ENCODE measurements at regions of chr6 and their contacts with region 1.

Region 1: GRCh38 chr6:31541658-31542521 is at the start of gene DDX39B:
- DNase-seq: peak; percentile 95
- ATAC-seq: peak; percentile 79
- H3K4me3 Mint-ChIP-seq: peak within 1 kb of the TSS; percentile 81
- H3K27ac Mint-ChIP-seq: peak within 1 kb of the TSS; percentile 95
- H3K4me1 Mint-ChIP-seq: peaks cover 43% of the 10 kb centered on the region
- H3K27me3 Mint-ChIP-seq: no peaks in the 10 kb centered on the region
- CTCF ChIP-seq: no peak
- total RNA-seq, gene DDX39B: 568 to 572 TPM

Region 2: GRCh38 chr6:31529329-31530150 is 12.3 kb before region 1 on chr6:
- CTCF ChIA-PET with region 1: interaction called, 7 read pairs
- POLR2A ChIA-PET with region 1: interaction called, 24 read pairs
- intact Hi-C with region 1: no loop called
- DNase-seq: no peak
- ATAC-seq: peak; percentile 19
- H3K4me3 Mint-ChIP-seq: no peak overlapping the region
- H3K27ac Mint-ChIP-seq: peak overlapping the region; percentile 15
- H3K4me1 Mint-ChIP-seq: peaks cover 12% of the 10 kb centered on the region
- H3K27me3 Mint-ChIP-seq: no peaks in the 10 kb centered on the region
- CTCF ChIP-seq: no peak

Region 3: DNA sequence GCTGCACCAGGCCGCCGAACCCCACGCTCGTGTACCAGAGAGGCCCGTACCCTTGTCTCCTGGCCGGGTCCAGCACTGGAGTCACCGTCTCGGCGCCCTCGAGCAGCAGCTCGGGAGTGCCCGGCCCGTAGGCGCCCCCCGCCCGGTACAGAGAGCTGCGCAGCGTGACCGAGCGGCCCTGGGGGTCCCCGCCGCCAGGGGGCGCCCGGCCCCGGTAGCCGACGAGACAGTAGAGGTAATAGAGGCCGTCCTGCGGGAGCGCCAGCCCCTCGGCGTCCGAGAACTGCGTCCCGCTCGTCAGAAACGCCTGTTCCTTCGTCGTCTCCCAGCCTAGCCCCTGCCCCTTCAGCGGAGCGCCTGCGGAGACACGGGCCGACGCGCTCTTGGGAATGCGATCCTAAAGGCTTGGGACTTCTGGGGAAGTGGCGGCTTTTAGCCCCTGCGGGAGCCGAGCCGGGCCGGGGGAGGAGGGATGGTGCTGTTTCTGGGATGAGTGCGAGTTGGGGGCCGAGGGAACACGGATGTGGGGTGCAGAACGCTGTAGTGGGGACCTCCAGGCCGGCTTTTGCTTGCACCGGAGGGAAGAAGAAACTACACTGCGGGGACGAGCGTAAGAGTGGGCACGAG is 39.0 kb after region 1 on chr6:
- CTCF ChIA-PET with region 1: interaction called, 2,542 read pairs
- POLR2A ChIA-PET with region 1: interaction called, 97 read pairs
- intact Hi-C with region 1: loop called (anchors 5 kb)
- DNase-seq: peak; percentile 92
- ATAC-seq: peak; percentile 55
- H3K4me3 Mint-ChIP-seq: peak overlapping the region; percentile 96
- H3K27ac Mint-ChIP-seq: peak overlapping the region; percentile 98
- H3K4me1 Mint-ChIP-seq: peaks cover 47% of the 10 kb centered on the region
- H3K27me3 Mint-ChIP-seq: no peaks in the 10 kb centered on the region
- CTCF ChIP-seq: peak; percentile 97

Region 4: DNA sequence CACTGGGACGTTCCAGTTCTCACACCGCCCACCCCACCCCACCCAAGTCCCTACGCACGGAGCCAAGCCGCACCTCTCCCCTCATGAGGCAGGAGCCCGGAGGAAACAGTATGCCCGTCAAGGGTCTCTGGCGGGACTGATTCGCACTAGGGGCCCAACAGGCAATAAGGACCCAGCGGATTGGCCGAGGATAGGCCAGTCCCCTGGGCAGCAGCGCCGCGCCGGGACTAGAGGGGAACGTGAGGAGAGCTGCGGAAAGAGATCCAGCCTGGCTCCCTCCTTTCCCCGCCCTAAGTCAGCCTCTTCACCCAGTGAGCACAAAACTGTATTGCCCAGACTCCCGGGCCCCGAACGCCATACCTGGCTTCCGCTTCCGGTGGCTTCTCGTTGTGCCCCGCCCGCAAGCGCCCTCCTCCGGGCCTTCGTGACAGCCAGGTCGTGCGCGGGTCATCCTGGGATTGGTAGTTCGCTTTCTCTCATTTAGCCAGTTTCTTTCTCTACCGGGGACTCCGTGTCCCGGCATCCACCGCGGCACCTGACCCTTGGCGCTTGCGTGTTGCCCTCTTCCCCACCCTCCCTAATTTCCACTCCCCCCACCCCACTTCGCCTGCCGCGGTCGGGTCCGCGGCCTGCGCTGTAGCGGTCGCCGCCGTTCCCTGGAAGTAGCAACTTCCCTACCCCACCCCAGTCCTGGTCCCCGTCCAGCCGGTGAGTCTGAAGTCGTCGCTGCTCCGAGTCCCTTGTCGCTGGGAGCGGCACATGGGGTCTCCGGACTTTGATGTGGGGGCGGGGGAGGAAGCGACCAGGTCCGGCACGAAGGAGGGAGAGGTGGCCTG is 123.8 kb after region 1 on chr6 and contains the start of gene CSNK2B:
- CTCF ChIA-PET with region 1: no interaction called
- POLR2A ChIA-PET with region 1: interaction called, 7 read pairs
- intact Hi-C with region 1: loop called (anchors 10 kb)
- DNase-seq: peak; percentile 99
- ATAC-seq: peak; percentile 88
- H3K4me3 Mint-ChIP-seq: peak within 1 kb of the TSS; percentile 98
- H3K27ac Mint-ChIP-seq: peak within 1 kb of the TSS; percentile 97
- H3K4me1 Mint-ChIP-seq: peaks cover 61% of the 10 kb centered on the region
- H3K27me3 Mint-ChIP-seq: no peaks in the 10 kb centered on the region
- CTCF ChIP-seq: no peak
- total RNA-seq, gene CSNK2B: 241 to 247 TPM